ENCODE measurements at regions of chr17 and their contacts with region 1.

Region 1: DNA sequence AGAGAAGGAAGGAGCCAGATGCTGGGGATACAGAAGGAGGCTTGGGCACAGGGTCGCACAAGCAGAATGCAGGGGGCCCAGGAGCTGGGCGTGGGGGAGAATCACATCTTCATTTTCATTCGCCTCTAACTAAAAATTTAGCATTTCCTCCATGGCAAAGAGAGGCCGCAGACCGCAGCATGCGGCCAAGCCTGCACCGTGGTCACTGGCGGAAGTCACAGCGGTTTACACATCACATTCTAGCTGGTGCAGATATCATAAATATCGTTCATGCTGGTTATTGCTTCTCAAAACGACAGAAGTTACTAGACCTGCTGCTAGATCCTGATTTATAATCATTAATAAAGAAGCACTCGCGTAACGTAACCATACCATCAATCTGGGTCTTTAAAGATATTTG is 162.0 kb downstream of the NTN1 start:
- DNase-seq: no peak
- ATAC-seq: no peak

Region 2: GRCh38 chr17:9120471-9120870 is 62.8 kb before region 1 on chr17:
- intact Hi-C with region 1: loop called in 1 of 2 experiments (anchors 10 kb)
- DNase-seq: no peak
- ATAC-seq: no peak

Region 3: GRCh38 chr17:9273428-9274391 is 90.4 kb after region 1 on chr17:
- intact Hi-C with region 1: no loop called
- DNase-seq: peak; percentile 40
- ATAC-seq: peak; percentile 68 to 77